ENCODE measurements at regions of chr19 and their contacts with region 1.

Region 1: GRCh38 chr19:49118565-49119410 is at the start of gene C19orf73:
- DNase-seq: peak; percentile 99
- H3K4me3 Mint-ChIP-seq: peak within 1 kb of the TSS; percentile 90
- H3K27ac Mint-ChIP-seq: peak within 1 kb of the TSS; percentile 90
- H3K4me1 Mint-ChIP-seq: peaks cover 25% of the 10 kb centered on the region
- H3K27me3 Mint-ChIP-seq: peaks cover 18% of the 10 kb centered on the region
- total RNA-seq, gene C19orf73: 2.0 and 2.5 TPM in 2 replicates

Region 2: GRCh38 chr19:49085020-49085867 is 33.5 kb before region 1 on chr19 and contains the start of gene SNRNP70:
- intact Hi-C with region 1: loop called (anchors 1 kb)
- DNase-seq: peak; percentile 99
- H3K4me3 Mint-ChIP-seq: peak within 1 kb of the TSS; percentile 98
- H3K27ac Mint-ChIP-seq: peak within 1 kb of the TSS; percentile 86
- H3K4me1 Mint-ChIP-seq: peaks cover 28% of the 10 kb centered on the region
- H3K27me3 Mint-ChIP-seq: peaks cover 4% of the 10 kb centered on the region
- total RNA-seq, gene SNRNP70: 270 and 281 TPM in 2 replicates

Region 3: DNA sequence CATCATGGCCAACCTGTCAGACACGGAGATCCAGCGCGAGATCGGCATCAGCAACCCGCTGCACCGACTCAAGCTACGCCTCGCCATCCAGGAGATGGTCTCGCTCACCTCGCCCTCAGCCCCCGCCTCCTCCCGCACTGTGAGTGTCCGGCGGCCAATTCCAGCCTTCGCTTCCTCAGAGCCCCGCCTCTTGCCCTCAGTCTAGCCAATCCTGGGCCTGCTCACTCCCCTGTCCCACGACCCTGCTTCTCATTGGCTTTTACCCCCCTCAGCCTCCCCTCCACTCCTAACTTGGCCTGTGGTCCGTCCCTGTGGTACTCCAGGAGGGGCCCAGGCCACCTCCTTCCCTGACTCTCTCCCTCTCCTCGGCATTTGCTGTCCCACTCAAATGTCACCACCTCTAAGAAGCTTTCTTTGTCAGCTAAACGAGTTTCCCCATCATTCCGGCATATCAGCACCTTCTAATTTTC is 24.1 kb after region 1 on chr19:
- intact Hi-C with region 1: loop called (anchors 2 kb)
- DNase-seq: peak; percentile 93
- H3K4me3 Mint-ChIP-seq: peak overlapping the region; percentile 93
- H3K27ac Mint-ChIP-seq: peak overlapping the region; percentile 67
- H3K4me1 Mint-ChIP-seq: peaks cover 19% of the 10 kb centered on the region
- H3K27me3 Mint-ChIP-seq: peaks cover 21% of the 10 kb centered on the region

Region 4: DNA sequence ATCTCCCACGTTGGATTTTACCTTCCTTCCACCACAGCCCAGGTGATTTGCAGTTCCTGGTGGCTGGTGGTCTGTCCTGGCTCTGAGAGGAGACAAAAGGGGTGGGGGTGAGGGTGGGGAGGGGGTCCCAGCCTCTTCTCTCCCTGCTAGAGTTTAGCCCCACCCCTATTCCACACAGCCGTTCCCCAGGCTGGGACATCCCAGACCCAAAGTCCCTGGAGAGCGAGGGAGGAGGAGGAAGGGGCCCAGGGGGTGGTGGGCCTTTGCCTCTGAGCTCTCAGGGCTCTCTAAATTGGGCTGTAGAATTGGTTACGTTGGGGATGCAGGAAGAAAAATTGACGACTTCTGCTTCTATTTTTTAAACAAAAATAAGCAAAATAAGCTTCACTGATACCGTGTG is 124.3 kb after region 1 on chr19:
- intact Hi-C with region 1: no loop called
- DNase-seq: no peak
- H3K4me3 Mint-ChIP-seq: no peak overlapping the region
- H3K27ac Mint-ChIP-seq: no peak overlapping the region
- H3K4me1 Mint-ChIP-seq: no peaks in the 10 kb centered on the region
- H3K27me3 Mint-ChIP-seq: peaks cover 6% of the 10 kb centered on the region

Measured in activated CD4-positive, alpha-beta T cell treated with anti-CD3 and anti-CD28 coated beads, Interleukin-2, amount 10 ng/mL, durations not matched to agents 24 days and 14 days (primary cell).